Naive thymus-derived CD4-positive, alpha-beta T cell (primary cell): ENCODE measurements at regions of chr16 and their contacts with region 1.

Region 1: GRCh38 chr16:391885-392335 is 5.1 kb upstream of the NME4 start:
- DNase-seq: peak; percentile 47 to 71 (median 67)
- ATAC-seq: peak; percentile 92
- H3K4me3 ChIP-seq: no peak overlapping the region
- H3K4me3 Mint-ChIP-seq: no peak overlapping the region
- H3K27ac ChIP-seq: no peak overlapping the region
- H3K27ac Mint-ChIP-seq: peak overlapping the region in 5 of 9 donors; percentile 33 to 81 (median 71)
- H3K4me1 ChIP-seq: peaks cover 4 to 6% of the 10 kb centered on the region in 2 donors
- H3K4me1 Mint-ChIP-seq: peaks cover 6 to 28% (median 12%) of the 10 kb centered on the region in 7 donors
- H3K27me3 ChIP-seq: no peaks in the 10 kb centered on the region
- H3K27me3 Mint-ChIP-seq: peaks cover 0 to 12% (median 0%) of the 10 kb centered on the region in 5 donors

Region 2: GRCh38 chr16:483341-484075 is 91.6 kb after region 1 on chr16:
- CTCF ChIA-PET with region 1: interaction called, 3 read pairs
- POLR2A ChIA-PET with region 1: no interaction called
- intact Hi-C with region 1: loop called (anchors 2 to 10 kb)
- DNase-seq: no peak
- ATAC-seq: no peak
- H3K4me3 ChIP-seq: no peak overlapping the region
- H3K4me3 Mint-ChIP-seq: no peak overlapping the region
- H3K27ac ChIP-seq: no peak overlapping the region
- H3K27ac Mint-ChIP-seq: no peak overlapping the region
- H3K4me1 ChIP-seq: no peaks in the 10 kb centered on the region
- H3K4me1 Mint-ChIP-seq: peaks cover 0 to 5% (median 0%) of the 10 kb centered on the region in 7 donors
- H3K27me3 ChIP-seq: no peaks in the 10 kb centered on the region
- H3K27me3 Mint-ChIP-seq: no peaks in the 10 kb centered on the region

Region 3: DNA sequence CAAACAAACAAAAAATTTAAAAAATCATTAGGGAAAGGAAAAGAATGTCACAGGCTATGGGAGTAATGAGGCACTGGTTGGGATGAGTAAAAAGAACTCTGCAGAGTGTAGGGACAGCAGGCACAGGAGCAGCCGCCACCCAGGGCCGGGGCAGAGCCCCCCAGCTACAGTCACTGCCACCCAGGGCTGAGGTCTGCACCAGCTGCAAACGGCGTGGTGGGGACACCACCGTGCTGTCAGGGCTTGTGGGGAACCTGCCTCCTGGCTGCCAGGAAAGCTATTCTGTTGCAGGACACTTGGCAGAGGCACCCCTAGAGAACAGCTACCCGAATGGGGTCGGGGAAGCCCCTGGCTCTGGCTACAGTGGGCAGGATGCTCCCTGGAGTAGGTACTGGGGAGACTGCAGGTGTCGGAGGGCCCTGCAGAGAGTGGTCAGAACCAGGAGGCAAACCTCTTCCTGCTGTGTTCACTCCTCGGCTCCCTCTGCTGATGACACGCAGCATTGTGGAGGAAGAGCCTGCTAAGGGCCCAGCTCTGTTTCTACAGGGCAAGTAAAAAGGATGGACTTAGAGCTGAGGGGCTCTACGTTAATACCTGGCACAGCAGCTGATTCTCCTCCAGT is 103.3 kb after region 1 on chr16:
- CTCF ChIA-PET with region 1: no interaction called
- POLR2A ChIA-PET with region 1: no interaction called
- intact Hi-C with region 1: loop called in 1 of 2 experiments (anchors 1 kb)
- DNase-seq: peak in 3 of 9 donors; percentile 7 to 20 (median 16)
- ATAC-seq: no peak
- H3K4me3 ChIP-seq: no peak overlapping the region
- H3K4me3 Mint-ChIP-seq: no peak overlapping the region
- H3K27ac ChIP-seq: no peak overlapping the region
- H3K27ac Mint-ChIP-seq: peak overlapping the region in 1 of 9 donors; percentile 67
- H3K4me1 ChIP-seq: no peaks in the 10 kb centered on the region
- H3K4me1 Mint-ChIP-seq: peaks cover 0 to 5% (median 0%) of the 10 kb centered on the region in 7 donors
- H3K27me3 ChIP-seq: no peaks in the 10 kb centered on the region
- H3K27me3 Mint-ChIP-seq: no peaks in the 10 kb centered on the region